ENCODE measurements at regions of chr18 and their contacts with region 1.

Region 1: DNA sequence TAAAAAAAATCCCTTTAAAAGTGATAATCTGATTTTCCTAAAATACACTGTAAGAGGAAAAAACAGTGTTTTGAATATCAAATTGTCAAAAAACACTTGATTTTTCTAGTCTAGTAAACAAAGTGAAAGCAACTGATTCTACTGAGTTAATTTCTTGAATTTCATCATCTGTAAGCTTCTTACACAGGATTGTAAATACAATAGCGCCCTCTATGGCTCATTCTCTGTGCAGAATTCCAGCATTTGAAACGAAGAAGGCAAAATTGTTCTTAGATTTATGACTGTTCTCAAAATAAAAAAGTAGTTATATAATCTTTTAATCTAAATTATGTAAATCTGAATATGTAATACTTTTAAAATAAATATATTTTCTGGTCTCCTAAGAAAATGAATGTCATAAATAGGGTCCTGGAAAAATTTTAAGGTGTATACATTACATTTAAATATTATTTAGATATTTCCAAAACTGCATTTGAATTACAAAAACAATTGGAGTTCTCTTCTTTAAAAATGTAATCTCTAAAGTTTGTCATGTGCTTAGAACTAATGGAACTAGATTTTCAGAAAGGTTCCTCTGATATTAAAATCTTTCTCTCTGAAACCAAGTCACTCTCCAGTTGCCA is 176.9 kb upstream of the MC4R start:
- DNase-seq: no peak
- H3K27ac ChIP-seq: no peak overlapping the region
- CTCF ChIP-seq: peak; percentile 77

Region 2: GRCh38 chr18:59996370-59996966 is 553.0 kb before region 1 on chr18:
- CTCF ChIA-PET with region 1: interaction called, 12 read pairs
- POLR2A ChIA-PET with region 1: no interaction called
- DNase-seq: peak; percentile 31
- H3K27ac ChIP-seq: no peak overlapping the region
- CTCF ChIP-seq: peak; percentile 69

Region 3: DNA sequence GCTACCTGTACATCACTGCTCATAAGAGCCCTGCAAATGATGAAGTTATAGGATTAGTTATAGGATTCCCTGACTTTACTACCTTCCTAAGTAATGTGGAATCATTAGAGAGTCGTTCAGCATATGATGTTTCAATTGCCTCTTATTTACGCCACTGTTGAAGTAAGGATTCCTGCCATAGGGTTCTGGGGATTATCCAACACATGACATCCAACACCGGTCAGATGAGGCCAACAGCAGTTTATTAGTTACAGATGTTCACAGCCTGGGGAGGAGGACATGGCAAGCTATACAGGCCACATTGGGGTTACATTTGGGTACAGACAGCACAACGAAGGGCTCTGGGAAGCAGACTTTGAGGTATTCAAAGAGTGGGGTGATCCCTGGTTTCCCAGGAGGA is 42.8 kb before region 1 on chr18:
- CTCF ChIA-PET with region 1: no interaction called
- POLR2A ChIA-PET with region 1: no interaction called
- DNase-seq: no peak
- H3K27ac ChIP-seq: no peak overlapping the region
- CTCF ChIP-seq: no peak